Left cardiac atrium (tissue), 4 donors: ENCODE measurements at regions of chr7 and their contacts with region 1.

Region 1: GRCh38 chr7:101217388-101218235 is at the starts of genes PLOD3 and ZNHIT1:
- DNase-seq: peak; percentile 99
- ATAC-seq: peak; percentile 91 to 94
- total RNA-seq, gene PLOD3: 49.6 to 59.1 TPM
- total RNA-seq, gene ZNHIT1: 48.0 to 53.9 TPM

Region 2: GRCh38 chr7:101251871-101252659 is 34.5 kb after region 1 on chr7:
- intact Hi-C with region 1: loop called in 1 of 2 experiments (anchors 5 kb)
- DNase-seq: peak; percentile 99
- ATAC-seq: peak; percentile 100